ENCODE measurements at regions of chr2 and their contacts with region 1.

Region 1: DNA sequence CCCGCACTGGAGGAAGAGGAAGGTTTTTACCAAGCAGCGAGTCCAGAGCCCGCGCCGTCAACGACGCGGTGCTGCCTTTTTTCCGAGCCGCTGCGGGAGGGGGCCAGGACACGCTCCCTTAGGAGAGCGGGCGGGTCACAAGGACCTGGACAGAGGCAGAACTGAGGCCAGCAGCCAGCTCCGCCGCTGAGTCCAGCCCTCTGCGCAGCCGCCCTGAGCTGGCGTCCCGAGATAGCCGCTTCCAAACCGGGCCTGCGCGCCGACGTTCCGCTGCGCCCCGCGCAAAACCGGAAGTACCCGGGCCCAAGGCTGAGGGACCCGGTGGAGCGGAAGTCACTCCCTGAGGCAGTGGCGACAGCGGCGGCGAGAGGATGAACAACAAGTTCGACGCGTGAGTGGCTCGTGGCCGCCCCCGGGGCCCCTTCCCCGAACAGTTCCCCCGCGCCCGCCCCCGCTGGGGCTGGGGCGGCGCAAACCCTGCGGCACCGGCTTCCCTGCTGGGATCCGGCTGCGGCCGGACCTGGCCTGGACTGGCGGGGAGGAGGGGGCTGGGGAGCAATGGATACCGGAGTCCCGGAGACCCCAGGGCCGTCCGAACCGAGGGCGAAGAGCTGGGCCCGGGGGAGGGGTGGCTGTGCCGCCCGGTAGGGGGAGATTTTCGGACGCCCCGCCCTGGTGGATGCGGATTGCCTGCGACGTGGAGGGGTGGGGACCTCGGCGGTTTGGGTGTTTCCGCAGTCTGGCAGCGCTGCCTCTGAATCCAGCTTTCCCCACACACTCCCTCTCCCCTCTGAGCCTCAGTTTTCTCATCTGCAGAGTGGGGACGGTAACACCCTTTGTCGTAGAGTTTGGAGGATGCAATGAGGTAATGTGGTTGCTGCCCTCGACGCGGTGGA is at the starts of genes EIF4E2 and TIGD1:
- DNase-seq: peak; percentile 82 to 93 (median 90)
- ATAC-seq: peak; percentile 91
- H3K4me3 ChIP-seq: peak within 1 kb of the TSS; percentile 88
- H3K4me3 Mint-ChIP-seq: peak within 1 kb of the TSS; percentile 91 to 100 (median 100)
- H3K27ac ChIP-seq: peak within 1 kb of the TSS; percentile 92
- H3K27ac Mint-ChIP-seq: peak within 1 kb of the TSS; percentile 97 to 100 (median 100)
- H3K4me1 ChIP-seq: peaks cover 15 to 36% of the 10 kb centered on the region in 2 donors
- H3K4me1 Mint-ChIP-seq: peaks cover 53 to 86% (median 83%) of the 10 kb centered on the region in 7 donors
- H3K27me3 ChIP-seq: no peaks in the 10 kb centered on the region
- H3K27me3 Mint-ChIP-seq: no peaks in the 10 kb centered on the region
- total RNA-seq, gene EIF4E2: 51.9 to 77.6 (median 61.6) TPM
- total RNA-seq, gene TIGD1: 9.7 to 23.4 (median 19.3) TPM

Region 2: DNA sequence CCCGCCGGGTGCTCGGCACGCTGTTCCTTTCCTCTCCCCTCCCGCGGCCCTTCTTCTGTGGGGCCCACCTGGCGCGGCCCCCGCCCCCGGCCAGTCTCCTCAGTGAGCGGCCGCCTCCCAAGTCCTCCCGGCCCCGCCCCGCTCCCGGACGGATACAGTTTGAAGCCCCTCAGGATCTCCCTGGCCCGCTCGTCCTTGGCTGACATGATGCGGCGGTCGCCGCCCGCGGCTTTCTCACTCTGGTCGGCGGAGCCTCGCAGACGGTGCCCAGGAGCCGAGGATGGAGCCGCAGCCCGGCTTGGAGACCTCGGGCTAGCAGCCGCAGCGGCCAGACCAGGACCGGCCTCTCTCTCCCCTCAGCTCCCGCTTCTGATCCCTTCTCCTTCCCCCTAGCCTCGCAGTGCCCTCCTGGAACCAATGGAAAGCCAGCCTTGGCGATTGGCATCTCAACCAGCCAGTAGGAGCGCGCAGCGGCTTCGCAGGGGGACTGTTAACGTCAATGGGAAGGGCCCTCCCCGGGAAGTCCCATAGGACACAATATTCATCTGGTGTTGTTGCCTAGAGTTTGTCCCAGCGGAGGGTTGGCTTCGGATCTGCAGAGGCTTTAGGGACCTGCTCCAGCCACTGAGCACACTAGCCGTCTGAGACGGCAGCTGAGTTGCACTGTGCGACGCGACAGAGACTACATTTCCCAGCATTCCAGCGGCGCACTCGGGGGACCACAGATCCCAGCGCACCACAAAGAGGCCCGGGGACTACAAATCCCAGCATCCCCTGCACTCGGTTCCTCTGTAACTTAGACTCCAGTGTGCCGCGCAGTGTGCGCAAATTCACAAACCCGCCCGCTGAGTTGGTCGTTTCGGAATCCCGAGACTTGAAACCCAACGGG is 769.4 kb before region 1 on chr2 and contains the start of gene PDE6D:
- CTCF ChIA-PET with region 1: no interaction called
- POLR2A ChIA-PET with region 1: interaction called, 3 read pairs
- intact Hi-C with region 1: loop called in 1 of 2 experiments (anchors 1 kb)
- DNase-seq: peak; percentile 90 to 98 (median 94)
- ATAC-seq: peak; percentile 94
- H3K4me3 ChIP-seq: peak within 1 kb of the TSS; percentile 100
- H3K4me3 Mint-ChIP-seq: peak within 1 kb of the TSS; percentile 85 to 99 (median 98)
- H3K27ac ChIP-seq: peak within 1 kb of the TSS; percentile 82
- H3K27ac Mint-ChIP-seq: peak within 1 kb of the TSS; percentile 90 to 98 (median 94)
- H3K4me1 ChIP-seq: peaks cover 26 to 30% of the 10 kb centered on the region in 2 donors
- H3K4me1 Mint-ChIP-seq: peaks cover 45 to 76% (median 57%) of the 10 kb centered on the region in 7 donors
- H3K27me3 ChIP-seq: no peaks in the 10 kb centered on the region
- H3K27me3 Mint-ChIP-seq: peaks cover 0 to 5% (median 0%) of the 10 kb centered on the region in 5 donors
- total RNA-seq, gene PDE6D: 14.3 to 35.7 (median 25.2) TPM

Region 3: GRCh38 chr2:231961349-231962166 is 589.0 kb before region 1 on chr2 and contains the start of gene DIS3L2:
- CTCF ChIA-PET with region 1: no interaction called
- POLR2A ChIA-PET with region 1: no interaction called
- intact Hi-C with region 1: loop called (anchors 2 to 5 kb)
- DNase-seq: peak; percentile 66 to 83 (median 81)
- ATAC-seq: peak; percentile 96
- H3K4me3 ChIP-seq: peak within 1 kb of the TSS; percentile 79
- H3K4me3 Mint-ChIP-seq: peak within 1 kb of the TSS; percentile 83 to 96 (median 91)
- H3K27ac ChIP-seq: peak within 1 kb of the TSS; percentile 77
- H3K27ac Mint-ChIP-seq: peak within 1 kb of the TSS; percentile 78 to 96 (median 94)
- H3K4me1 ChIP-seq: peaks cover 14 to 17% of the 10 kb centered on the region in 2 donors
- H3K4me1 Mint-ChIP-seq: peaks cover 22 to 52% (median 45%) of the 10 kb centered on the region in 7 donors
- H3K27me3 ChIP-seq: no peaks in the 10 kb centered on the region
- H3K27me3 Mint-ChIP-seq: peaks cover 0 to 3% (median under 1%) of the 10 kb centered on the region in 5 donors
- total RNA-seq, gene DIS3L2: 47.1 to 78.4 (median 66.4) TPM

Region 4: DNA sequence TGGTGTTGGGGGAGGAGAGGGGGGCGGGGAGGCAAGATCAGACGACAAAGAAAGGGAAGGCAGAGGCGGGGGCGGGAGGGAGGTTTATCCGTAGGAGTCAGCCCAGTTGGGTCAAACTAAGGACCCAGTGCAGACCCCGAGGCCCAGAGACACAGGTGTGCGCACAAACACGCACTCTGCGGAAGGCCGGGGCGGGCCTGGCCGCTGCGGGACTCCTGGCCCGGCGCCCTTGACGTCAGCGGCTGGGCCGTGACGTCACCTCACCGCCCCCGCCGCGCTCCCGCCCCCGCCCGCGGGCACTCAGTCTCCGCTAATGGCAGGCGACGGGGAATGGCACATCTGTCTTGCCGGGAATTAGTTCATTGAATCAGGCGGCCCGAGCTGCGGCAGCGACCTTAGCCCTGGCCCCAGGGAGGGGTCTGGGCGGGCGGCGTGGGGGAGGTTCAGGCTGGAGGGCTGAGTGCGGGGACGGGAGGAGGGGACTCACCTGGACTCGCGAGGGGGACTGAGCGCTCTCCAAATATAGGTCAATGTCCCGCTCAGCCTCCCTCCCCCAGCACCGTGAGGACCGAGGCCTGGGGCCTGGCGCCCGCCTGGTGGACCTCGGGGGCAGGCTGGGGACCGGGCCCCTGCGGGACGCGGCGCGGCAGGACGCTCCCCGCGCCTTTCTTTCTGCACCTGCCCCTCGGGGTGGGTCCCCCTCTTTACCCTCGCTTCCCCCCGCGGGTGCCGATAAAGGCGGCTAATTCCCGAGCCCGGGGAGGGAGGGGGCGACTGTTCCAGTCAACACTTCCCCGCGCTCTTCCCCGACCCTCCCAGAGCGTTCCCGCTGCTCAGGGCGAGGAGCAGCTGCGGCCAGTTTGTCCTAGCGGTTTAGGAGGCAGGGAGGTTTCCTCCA is 47.4 kb before region 1 on chr2:
- CTCF ChIA-PET with region 1: no interaction called
- POLR2A ChIA-PET with region 1: no interaction called
- intact Hi-C with region 1: no loop called
- DNase-seq: peak; percentile 36 to 64 (median 52)
- ATAC-seq: peak; percentile 72
- H3K4me3 ChIP-seq: no peak overlapping the region
- H3K4me3 Mint-ChIP-seq: peak overlapping the region in 8 of 10 donors; percentile 21 to 81 (median 46)
- H3K27ac ChIP-seq: no peak overlapping the region
- H3K27ac Mint-ChIP-seq: peak overlapping the region in 3 of 9 donors; percentile 55 to 67 (median 57)
- H3K4me1 ChIP-seq: peaks cover 0 to 4% of the 10 kb centered on the region in 2 donors
- H3K4me1 Mint-ChIP-seq: peaks cover 0 to 9% (median 4%) of the 10 kb centered on the region in 7 donors
- H3K27me3 ChIP-seq: peaks cover 0 to 7% of the 10 kb centered on the region in 2 donors
- H3K27me3 Mint-ChIP-seq: peaks cover 34 to 60% (median 42%) of the 10 kb centered on the region in 5 donors

Region 5: DNA sequence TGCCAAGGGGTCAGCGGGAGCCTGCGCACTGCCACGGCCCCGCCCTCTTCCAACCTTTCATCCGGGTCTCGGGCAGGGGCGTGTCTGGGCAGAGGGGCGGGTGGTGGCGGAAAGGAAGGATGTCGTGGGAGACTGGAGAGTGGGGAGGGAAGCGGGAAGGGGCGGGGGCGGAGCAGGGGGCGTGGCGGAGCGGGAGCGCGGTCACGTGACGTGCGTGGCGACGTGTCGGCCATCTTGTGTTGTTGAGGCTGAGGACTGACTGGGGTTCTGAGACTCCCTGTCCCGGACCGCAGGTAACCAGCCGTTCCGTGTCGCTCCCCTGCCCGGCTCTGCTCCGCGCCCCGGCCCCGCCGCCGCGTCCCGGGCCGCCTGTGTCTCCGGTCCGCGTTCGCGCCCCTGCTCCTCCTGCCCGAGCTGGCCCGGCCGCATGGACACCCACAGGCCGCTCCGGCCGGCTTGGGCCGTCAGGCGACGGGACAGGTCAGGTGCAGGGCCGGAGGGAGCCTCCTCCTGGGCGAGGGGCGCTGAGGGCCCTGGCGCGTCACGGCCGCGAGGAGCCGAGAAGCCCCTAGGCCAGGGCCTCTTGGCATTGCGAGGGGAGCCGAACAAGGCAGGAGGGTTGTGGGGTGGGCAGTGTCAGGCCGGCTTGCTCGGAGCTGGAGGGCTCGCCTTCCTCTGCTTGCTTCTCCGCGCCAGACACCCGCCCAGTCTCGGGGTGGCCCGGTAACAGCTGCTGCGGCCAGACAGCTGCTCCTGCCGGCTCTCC is 146.7 kb after region 1 on chr2 and contains the start of gene GIGYF2:
- CTCF ChIA-PET with region 1: no interaction called
- POLR2A ChIA-PET with region 1: no interaction called
- intact Hi-C with region 1: loop called (anchors 1 to 2 kb)
- DNase-seq: peak; percentile 73 to 94 (median 84)
- ATAC-seq: peak; percentile 95
- H3K4me3 ChIP-seq: peak within 1 kb of the TSS; percentile 94
- H3K4me3 Mint-ChIP-seq: peak within 1 kb of the TSS; percentile 88 to 98 (median 93)
- H3K27ac ChIP-seq: peak within 1 kb of the TSS; percentile 96
- H3K27ac Mint-ChIP-seq: peak within 1 kb of the TSS; percentile 82 to 96 (median 87)
- H3K4me1 ChIP-seq: peaks cover 35 to 37% of the 10 kb centered on the region in 2 donors
- H3K4me1 Mint-ChIP-seq: peaks cover 22 to 40% (median 35%) of the 10 kb centered on the region in 7 donors
- H3K27me3 ChIP-seq: no peaks in the 10 kb centered on the region
- H3K27me3 Mint-ChIP-seq: peaks cover 0 to 10% (median 0%) of the 10 kb centered on the region in 5 donors
- total RNA-seq, gene GIGYF2: 70.7 to 82.8 (median 79.8) TPM

Region 6: GRCh38 chr2:233331536-233331935 is 780.9 kb after region 1 on chr2:
- CTCF ChIA-PET with region 1: no interaction called
- POLR2A ChIA-PET with region 1: no interaction called
- intact Hi-C with region 1: loop called in 1 of 2 experiments (anchors 1 kb)
- DNase-seq: peak; percentile 45 to 89 (median 83)
- ATAC-seq: peak; percentile 96
- H3K4me3 ChIP-seq: peak overlapping the region; percentile 17
- H3K4me3 Mint-ChIP-seq: peak overlapping the region; percentile 65 to 82 (median 73)
- H3K27ac ChIP-seq: peak overlapping the region; percentile 75
- H3K27ac Mint-ChIP-seq: peak overlapping the region; percentile 94 to 99 (median 98)
- H3K4me1 ChIP-seq: peaks cover 46 to 58% of the 10 kb centered on the region in 2 donors
- H3K4me1 Mint-ChIP-seq: peaks cover 33 to 64% (median 51%) of the 10 kb centered on the region in 7 donors
- H3K27me3 ChIP-seq: no peaks in the 10 kb centered on the region
- H3K27me3 Mint-ChIP-seq: peaks cover 0 to 2% (median 0%) of the 10 kb centered on the region in 5 donors

Measured in naive thymus-derived CD4-positive, alpha-beta T cell (primary cell).